ENCODE measurements at regions of chr9 and their contacts with region 1.

Region 1: DNA sequence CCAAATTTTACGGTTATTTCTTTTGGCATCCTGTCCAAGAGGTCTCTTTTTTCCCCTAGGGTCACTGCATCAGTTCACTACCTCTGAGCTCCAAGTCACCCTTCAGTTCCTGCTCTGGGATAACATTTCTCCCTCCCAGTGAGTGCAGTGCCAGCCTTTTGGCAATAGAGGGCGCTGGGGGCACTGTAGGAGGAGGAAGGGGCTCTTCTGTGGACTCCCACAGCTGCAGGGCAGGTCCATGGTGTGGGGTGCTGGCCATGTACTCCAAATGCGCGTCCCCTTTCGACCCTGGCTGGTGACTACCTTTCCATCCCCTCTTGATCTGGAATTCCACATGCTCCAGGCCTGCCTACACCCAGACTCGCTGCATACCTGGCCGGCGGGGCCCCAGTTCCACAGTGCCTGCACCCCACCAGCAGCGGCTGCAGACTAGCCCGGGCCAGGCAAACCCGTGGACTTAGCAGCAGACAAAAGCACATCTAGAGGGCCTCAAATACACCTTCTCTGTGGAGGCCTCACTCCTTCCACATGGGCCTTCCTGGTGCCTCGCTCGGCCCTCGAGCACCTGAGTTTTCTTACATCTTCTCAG is 20.4 kb upstream of the NINJ1 start:
- DNase-seq: peak in 1 of 2 experiments; percentile 84
- H3K4me3 ChIP-seq: no peak overlapping the region
- H3K27ac ChIP-seq: no peak overlapping the region
- H3K4me1 ChIP-seq: no peaks in the 10 kb centered on the region
- H3K27me3 ChIP-seq: no peaks in the 10 kb centered on the region
- CTCF ChIP-seq: peak; percentile 82 to 89 (median 89)
- EP300 ChIP-seq: no peak
- POLR2A ChIP-seq: no peak
- RAD21 ChIP-seq: peak; percentile 71 to 77

Region 2: GRCh38 chr9:93081081-93081529 is 73.3 kb before region 1 on chr9:
- CTCF ChIA-PET with region 1: no interaction called
- POLR2A ChIA-PET with region 1: no interaction called
- DNase-seq: no peak
- H3K4me3 ChIP-seq: no peak overlapping the region
- H3K27ac ChIP-seq: no peak overlapping the region
- H3K4me1 ChIP-seq: no peaks in the 10 kb centered on the region; a peak in 1 of 7 replicates
- H3K27me3 ChIP-seq: no peaks in the 10 kb centered on the region
- CTCF ChIP-seq: no peak
- EP300 ChIP-seq: no peak
- POLR2A ChIP-seq: no peak
- RAD21 ChIP-seq: no peak

Region 3: DNA sequence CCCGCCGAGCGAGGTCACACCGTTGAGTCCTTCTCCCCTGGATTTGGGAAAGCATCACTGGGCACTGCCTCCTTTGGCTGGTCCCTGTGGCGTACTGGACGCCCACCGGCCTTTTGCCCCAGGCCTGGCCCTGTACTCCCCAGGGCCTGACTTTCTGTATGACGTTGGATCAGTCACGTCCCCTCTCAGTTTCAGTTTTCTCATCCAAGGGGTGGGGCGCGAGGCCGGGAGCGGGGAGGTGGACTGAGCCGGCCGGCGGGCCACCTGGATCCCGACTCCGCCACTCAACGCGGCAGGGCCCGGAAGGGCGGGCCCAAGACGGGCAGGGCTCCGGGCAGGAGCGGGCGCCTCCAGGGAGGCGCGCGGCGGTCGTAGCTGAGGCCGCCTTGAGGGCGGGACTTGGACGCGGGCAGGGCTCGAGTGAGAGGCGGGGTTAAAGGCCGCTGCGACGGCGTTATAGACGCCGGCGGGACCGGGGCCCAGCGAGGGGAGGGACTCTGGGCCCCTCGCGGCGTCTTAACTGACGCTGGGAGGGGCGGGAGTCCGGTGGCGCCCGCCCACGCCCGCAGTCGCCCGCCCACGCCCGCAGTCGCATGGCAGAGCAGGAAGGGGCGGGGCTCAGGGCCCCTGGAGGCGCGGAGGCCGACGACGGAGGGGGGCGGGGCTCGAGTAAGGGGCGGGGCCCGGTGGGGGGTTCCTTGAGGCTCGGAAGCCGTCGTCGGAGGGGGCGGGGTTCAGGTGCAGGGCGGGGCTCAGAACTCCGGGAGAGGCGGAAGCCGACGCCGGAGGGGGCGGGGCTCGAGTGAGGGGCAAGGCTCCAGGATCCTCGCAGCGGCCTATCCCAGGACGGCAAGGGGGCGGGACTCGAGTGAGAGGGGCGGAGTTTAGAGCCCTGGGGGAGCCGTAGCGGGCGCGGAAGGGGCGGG is 58.9 kb before region 1 on chr9:
- CTCF ChIA-PET with region 1: no interaction called
- POLR2A ChIA-PET with region 1: no interaction called
- DNase-seq: peak; percentile 87 to 97
- H3K4me3 ChIP-seq: peak overlapping the region; percentile 28 to 98 (median 34); a peak in 7 of 8 replicates
- H3K27ac ChIP-seq: peak overlapping the region; percentile 73; the same call in 1 of the 2 replicates
- H3K4me1 ChIP-seq: peaks cover 0 to 13% (median 7%) of the 10 kb centered on the region in 4 experiments; a peak in 4 of 7 replicates
- H3K27me3 ChIP-seq: no peaks in the 10 kb centered on the region; a peak in 1 of 7 replicates
- CTCF ChIP-seq: no peak
- EP300 ChIP-seq: no peak
- POLR2A ChIP-seq: 0 out of 3 replicates have a peak, but pooled peaks of 1 of the 2 experiments have one; percentile 55
- RAD21 ChIP-seq: peak in 1 of 2 experiments; percentile 2; a peak in 1 of 4 replicates

Region 4: GRCh38 chr9:93143830-93144530 is 10.4 kb before region 1 on chr9:
- CTCF ChIA-PET with region 1: interaction called, 74 read pairs
- POLR2A ChIA-PET with region 1: interaction called, 3 read pairs
- DNase-seq: no peak
- H3K4me3 ChIP-seq: no peak overlapping the region
- H3K27ac ChIP-seq: no peak overlapping the region
- H3K4me1 ChIP-seq: peaks cover 0 to 8% (median 3%) of the 10 kb centered on the region in 4 experiments; a peak in 2 of 7 replicates
- H3K27me3 ChIP-seq: no peaks in the 10 kb centered on the region
- CTCF ChIP-seq: no peak
- EP300 ChIP-seq: no peak
- POLR2A ChIP-seq: no peak
- RAD21 ChIP-seq: no peak

Region 5: GRCh38 chr9:93223260-93224180 is 69.1 kb after region 1 on chr9:
- CTCF ChIA-PET with region 1: no interaction called
- POLR2A ChIA-PET with region 1: no interaction called
- DNase-seq: no peak
- H3K4me3 ChIP-seq: no peak overlapping the region
- H3K27ac ChIP-seq: no peak overlapping the region
- H3K4me1 ChIP-seq: peaks cover 0 to 15% (median 9%) of the 10 kb centered on the region in 4 experiments; a peak in 6 of 7 replicates
- H3K27me3 ChIP-seq: no peaks in the 10 kb centered on the region
- CTCF ChIP-seq: no peak
- EP300 ChIP-seq: no peak
- POLR2A ChIP-seq: no peak
- RAD21 ChIP-seq: no peak

Measured in H1 (cell line).